IMR-90 (cell line): ENCODE measurements at regions of chr12 and their contacts with region 1.

Region 1: DNA sequence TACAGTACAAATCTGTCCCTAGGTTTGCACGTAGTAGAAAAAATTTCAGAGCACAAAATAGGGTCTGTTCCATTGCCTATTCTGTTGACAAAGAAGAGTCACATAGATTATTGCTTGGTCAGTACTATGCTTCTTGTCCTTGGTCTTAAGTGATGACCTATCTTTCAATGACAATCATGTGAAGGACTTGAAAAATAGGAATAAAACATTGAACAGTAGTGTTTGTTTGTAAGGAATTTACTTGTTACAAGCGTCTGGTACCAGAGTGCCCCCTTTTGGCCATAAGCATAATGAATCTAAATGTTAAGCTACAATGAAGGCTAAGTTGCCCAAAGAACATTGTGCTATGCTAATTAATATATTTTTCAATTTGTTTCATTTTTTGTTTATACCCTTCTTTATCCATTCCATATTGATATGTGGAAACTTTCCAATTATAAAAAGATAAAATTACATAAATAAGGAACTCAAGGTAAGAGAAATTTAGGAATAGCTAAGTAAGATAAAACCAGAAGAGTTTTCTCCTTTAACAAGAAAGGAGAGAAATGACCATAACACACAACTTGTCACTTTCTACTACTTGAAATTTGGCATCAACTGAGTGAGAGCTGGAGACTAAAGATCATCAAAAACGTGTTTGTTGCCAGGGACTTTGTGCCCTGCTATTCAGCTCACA is 204.7 kb downstream of the EPS8 start:
- DNase-seq: peak; percentile 83
- ATAC-seq: peak; percentile 81
- H3K4me3 ChIP-seq: no peak overlapping the region
- H3K27ac ChIP-seq: no peak overlapping the region
- H3K4me1 ChIP-seq: peaks cover 2% of the 10 kb centered on the region; the same call in 1 of the 2 replicates
- H3K27me3 ChIP-seq: peaks cover 2% of the 10 kb centered on the region; the same call in 1 of the 2 replicates
- CTCF ChIP-seq: peak; percentile 90
- POLR2A ChIP-seq: no peak
- RAD21 ChIP-seq: peak; percentile 86

Region 2: DNA sequence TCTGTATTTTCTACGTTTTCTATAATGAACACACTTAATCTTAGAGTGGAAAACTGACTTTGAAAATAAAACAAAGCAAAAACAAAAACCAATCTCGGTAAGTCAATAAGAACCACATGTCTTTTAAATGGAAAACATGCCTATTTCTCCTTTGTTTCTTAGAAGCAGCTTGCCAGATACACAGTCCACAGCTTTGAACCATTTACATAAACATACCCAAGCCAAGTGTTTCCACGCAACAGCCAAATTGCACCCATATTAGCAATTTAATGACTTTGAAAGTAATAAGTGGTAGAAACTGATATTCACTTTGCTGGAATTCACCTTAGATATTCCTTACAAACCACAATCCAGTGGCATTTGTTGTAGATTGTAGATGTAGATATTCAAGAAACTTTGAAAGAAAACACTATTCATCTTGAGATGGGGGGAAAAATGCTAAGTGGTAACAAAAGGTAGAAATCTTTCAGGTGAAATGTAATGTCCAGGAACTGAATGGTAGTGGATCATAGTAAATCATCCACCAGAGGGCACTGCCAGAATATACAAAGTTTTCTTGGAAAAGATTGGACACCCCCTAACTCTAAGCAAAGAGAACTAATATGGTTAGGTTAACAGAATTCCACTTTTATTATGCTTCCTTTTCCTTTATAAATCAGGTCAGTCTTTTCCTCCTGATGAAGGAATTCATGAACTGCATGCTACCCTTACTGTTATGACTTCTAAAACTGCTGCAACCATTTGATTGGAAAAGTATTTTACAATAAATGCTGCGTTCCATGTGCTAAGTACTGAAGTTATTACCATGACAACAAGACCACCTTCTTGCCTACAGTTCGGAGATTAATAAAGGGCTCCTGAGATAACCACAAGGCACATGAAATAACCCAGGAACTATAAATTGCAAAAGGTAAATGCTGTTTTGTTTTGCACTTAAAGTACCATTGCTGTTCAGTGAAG is 433.1 kb before region 1 on chr12:
- CTCF ChIA-PET with region 1: no interaction called
- POLR2A ChIA-PET with region 1: no interaction called
- dilution Hi-C with region 1: no loop called
- in situ Hi-C with region 1: no loop called
- intact Hi-C with region 1: loop called (anchors 10 kb)
- DNase-seq: no peak
- ATAC-seq: no peak
- H3K4me3 ChIP-seq: no peak overlapping the region
- H3K27ac ChIP-seq: no peak overlapping the region
- H3K4me1 ChIP-seq: no peaks in the 10 kb centered on the region
- H3K27me3 ChIP-seq: no peaks in the 10 kb centered on the region; the same call in 1 of the 2 replicates
- CTCF ChIP-seq: peak; percentile 31
- POLR2A ChIP-seq: no peak
- RAD21 ChIP-seq: no peak

Region 3: DNA sequence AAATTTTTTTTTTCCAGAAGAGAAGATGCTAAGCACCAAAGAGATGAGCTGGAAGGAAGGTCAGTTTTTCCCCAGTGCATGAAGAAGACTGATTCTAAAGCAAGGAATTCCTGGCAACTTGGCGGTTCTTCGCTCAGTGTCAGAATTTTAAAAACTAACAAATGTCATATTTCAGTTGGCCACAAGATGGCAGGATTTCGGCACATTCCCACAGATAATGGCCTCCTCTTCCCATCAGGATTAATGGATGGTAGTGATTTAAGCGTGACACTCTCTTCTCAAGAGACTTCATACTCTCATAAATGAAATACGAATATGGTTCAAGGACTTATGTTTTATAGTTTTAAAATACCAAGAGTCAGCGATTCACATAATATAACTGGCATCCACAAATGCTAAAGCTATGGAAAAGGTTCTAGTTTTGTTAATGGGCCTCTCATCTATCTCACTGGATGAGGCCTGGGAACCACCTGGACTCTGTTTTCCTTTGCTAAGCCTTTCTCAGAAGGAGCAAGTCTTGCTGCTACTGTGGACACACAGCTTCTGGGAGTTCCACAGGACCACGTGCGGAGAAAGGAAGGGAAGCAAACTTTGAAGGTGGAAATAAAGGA is 308.3 kb before region 1 on chr12:
- CTCF ChIA-PET with region 1: interaction called, 5 read pairs
- POLR2A ChIA-PET with region 1: no interaction called
- dilution Hi-C with region 1: no loop called
- in situ Hi-C with region 1: loop called (anchors 5 kb)
- intact Hi-C with region 1: loop called (anchors 1 kb)
- DNase-seq: peak; percentile 29
- ATAC-seq: peak; percentile 76
- H3K4me3 ChIP-seq: no peak overlapping the region
- H3K27ac ChIP-seq: no peak overlapping the region
- H3K4me1 ChIP-seq: no peaks in the 10 kb centered on the region
- H3K27me3 ChIP-seq: no peaks in the 10 kb centered on the region
- CTCF ChIP-seq: peak; percentile 79
- POLR2A ChIP-seq: no peak
- RAD21 ChIP-seq: peak; percentile 68

Region 4: GRCh38 chr12:15532364-15532977 is 52.0 kb before region 1 on chr12:
- CTCF ChIA-PET with region 1: interaction called, 20 read pairs
- POLR2A ChIA-PET with region 1: no interaction called
- dilution Hi-C with region 1: no loop called
- in situ Hi-C with region 1: loop called (anchors 5 kb)
- intact Hi-C with region 1: loop called (anchors 1 kb)
- DNase-seq: peak; percentile 77
- ATAC-seq: peak; percentile 86
- H3K4me3 ChIP-seq: no peak overlapping the region
- H3K27ac ChIP-seq: no peak overlapping the region
- H3K4me1 ChIP-seq: peaks cover 5% of the 10 kb centered on the region; the same call in 1 of the 2 replicates
- H3K27me3 ChIP-seq: no peaks in the 10 kb centered on the region
- CTCF ChIP-seq: peak; percentile 80
- POLR2A ChIP-seq: no peak
- RAD21 ChIP-seq: peak; percentile 84